Activated CD4-positive, alpha-beta T cell treated with anti-CD3 and anti-CD28 coated beads for 36 hours (primary cell): ENCODE measurements at regions of chr20 and their contacts with region 1.

Region 1: GRCh38 chr20:20824924-20825584 is 112.6 kb upstream of the RALGAPA2 start:
- DNase-seq: peak; percentile 77
- ATAC-seq: peak; percentile 70
- H3K4me3 Mint-ChIP-seq: no peak overlapping the region
- H3K27ac Mint-ChIP-seq: no peak overlapping the region
- H3K4me1 Mint-ChIP-seq: no peaks in the 10 kb centered on the region
- H3K27me3 Mint-ChIP-seq: peaks cover 22% of the 10 kb centered on the region

Region 2: DNA sequence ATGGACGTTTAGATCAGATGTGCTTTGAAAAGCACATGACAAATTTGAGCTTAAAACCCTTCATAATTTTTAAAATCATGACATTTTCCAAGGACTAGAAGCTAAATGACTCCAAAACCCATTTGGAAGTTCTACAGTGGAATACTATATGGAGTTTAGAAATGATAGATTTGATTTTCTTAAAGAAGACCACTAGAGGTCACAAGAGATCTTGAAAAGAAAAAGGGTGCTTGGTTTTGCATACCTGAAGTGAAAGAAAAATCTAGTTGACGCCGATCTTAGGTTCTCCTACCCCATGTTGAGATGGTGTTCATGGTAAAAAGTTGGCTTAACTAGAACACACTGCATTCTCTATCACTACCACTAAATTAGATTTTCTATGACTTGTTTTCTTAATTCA is 741.2 kb before region 1 on chr20:
- CTCF ChIA-PET with region 1: no interaction called
- POLR2A ChIA-PET with region 1: no interaction called
- intact Hi-C with region 1: loop called (anchors 2 kb)
- DNase-seq: no peak
- ATAC-seq: peak; percentile 44
- H3K4me3 Mint-ChIP-seq: no peak overlapping the region
- H3K27ac Mint-ChIP-seq: no peak overlapping the region
- H3K4me1 Mint-ChIP-seq: peaks cover 2% of the 10 kb centered on the region
- H3K27me3 Mint-ChIP-seq: peaks cover 10% of the 10 kb centered on the region

Region 3: DNA sequence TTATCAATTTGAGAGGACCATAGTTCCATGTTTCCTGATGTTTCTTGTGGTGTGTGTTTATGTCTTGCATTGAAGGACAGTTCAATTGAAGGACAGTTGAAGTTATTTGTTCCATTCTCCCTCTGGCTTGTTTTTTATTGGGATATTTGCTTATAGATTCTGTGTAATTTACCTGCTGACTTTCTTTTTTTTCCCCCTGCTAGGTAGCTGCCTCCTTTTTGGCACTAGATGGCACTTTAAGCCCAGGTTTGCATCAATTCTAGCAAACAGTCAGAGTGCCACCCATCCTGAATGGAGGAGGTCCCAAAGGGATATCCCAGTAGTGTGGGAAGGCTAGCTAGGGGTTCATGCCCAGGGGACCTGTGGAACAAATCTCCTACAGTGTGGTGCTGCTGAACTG is 694.7 kb before region 1 on chr20:
- CTCF ChIA-PET with region 1: no interaction called
- POLR2A ChIA-PET with region 1: no interaction called
- intact Hi-C with region 1: loop called in 1 of 2 experiments (anchors 5 kb)
- DNase-seq: no peak
- ATAC-seq: no peak
- H3K4me3 Mint-ChIP-seq: no peak overlapping the region
- H3K27ac Mint-ChIP-seq: no peak overlapping the region
- H3K4me1 Mint-ChIP-seq: no peaks in the 10 kb centered on the region
- H3K27me3 Mint-ChIP-seq: peaks cover 27% of the 10 kb centered on the region

Region 4: GRCh38 chr20:20664795-20665589 is 160.1 kb before region 1 on chr20:
- CTCF ChIA-PET with region 1: interaction called, 6 read pairs
- POLR2A ChIA-PET with region 1: no interaction called
- intact Hi-C with region 1: loop called (anchors 1 kb)
- DNase-seq: peak; percentile 10
- ATAC-seq: peak; percentile 73
- H3K4me3 Mint-ChIP-seq: no peak overlapping the region
- H3K27ac Mint-ChIP-seq: no peak overlapping the region
- H3K4me1 Mint-ChIP-seq: peaks cover 18% of the 10 kb centered on the region
- H3K27me3 Mint-ChIP-seq: no peaks in the 10 kb centered on the region

Region 5: GRCh38 chr20:20680991-20681508 is 144.0 kb before region 1 on chr20:
- CTCF ChIA-PET with region 1: interaction called, 6 read pairs
- POLR2A ChIA-PET with region 1: no interaction called
- intact Hi-C with region 1: loop called in 1 of 2 experiments (anchors 5 kb)
- DNase-seq: no peak
- ATAC-seq: peak; percentile 19
- H3K4me3 Mint-ChIP-seq: no peak overlapping the region
- H3K27ac Mint-ChIP-seq: peak overlapping the region; percentile 30
- H3K4me1 Mint-ChIP-seq: peaks cover 45% of the 10 kb centered on the region
- H3K27me3 Mint-ChIP-seq: no peaks in the 10 kb centered on the region

Region 6: GRCh38 chr20:20699144-20699543 is 125.9 kb before region 1 on chr20:
- CTCF ChIA-PET with region 1: no interaction called
- POLR2A ChIA-PET with region 1: no interaction called
- intact Hi-C with region 1: no loop called
- DNase-seq: no peak
- ATAC-seq: no peak
- H3K4me3 Mint-ChIP-seq: no peak overlapping the region
- H3K27ac Mint-ChIP-seq: no peak overlapping the region
- H3K4me1 Mint-ChIP-seq: peaks cover 26% of the 10 kb centered on the region
- H3K27me3 Mint-ChIP-seq: no peaks in the 10 kb centered on the region